Caco-2 (cell line): ENCODE measurements at regions of chrX and their contacts with region 1.

Region 1: DNA sequence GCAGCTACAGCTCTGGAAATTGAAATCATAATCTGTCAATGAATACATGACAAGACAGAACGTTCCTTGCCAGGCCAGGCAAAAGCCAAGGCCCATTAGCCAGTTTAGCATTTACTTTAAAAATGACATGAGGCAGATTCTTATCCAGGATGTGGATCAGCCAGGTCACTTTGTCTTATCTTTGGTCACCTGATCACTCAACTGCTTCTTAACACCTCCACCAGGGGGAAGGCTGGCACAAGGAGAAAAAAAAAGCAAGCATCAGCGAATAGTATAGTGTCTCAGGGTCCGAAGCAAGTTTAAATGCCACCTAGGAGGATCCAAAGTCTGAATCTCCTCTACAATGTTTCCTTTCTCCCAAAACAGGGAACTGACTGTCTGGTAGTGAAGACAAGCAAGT is 18.8 kb downstream of the ATP1B4 start:
- DNase-seq: peak in 1 of 2 experiments; percentile 24
- H3K4me3 ChIP-seq: no peak overlapping the region
- H3K4me3 Mint-ChIP-seq: no peak overlapping the region
- H3K27ac Mint-ChIP-seq: no peak overlapping the region
- H3K4me1 ChIP-seq: no peaks in the 10 kb centered on the region
- H3K4me1 Mint-ChIP-seq: no peaks in the 10 kb centered on the region
- H3K27me3 ChIP-seq: no peaks in the 10 kb centered on the region
- H3K27me3 Mint-ChIP-seq: peaks cover 4% of the 10 kb centered on the region
- CTCF ChIP-seq: peak in 1 of 2 experiments; percentile 39

Region 2: DNA sequence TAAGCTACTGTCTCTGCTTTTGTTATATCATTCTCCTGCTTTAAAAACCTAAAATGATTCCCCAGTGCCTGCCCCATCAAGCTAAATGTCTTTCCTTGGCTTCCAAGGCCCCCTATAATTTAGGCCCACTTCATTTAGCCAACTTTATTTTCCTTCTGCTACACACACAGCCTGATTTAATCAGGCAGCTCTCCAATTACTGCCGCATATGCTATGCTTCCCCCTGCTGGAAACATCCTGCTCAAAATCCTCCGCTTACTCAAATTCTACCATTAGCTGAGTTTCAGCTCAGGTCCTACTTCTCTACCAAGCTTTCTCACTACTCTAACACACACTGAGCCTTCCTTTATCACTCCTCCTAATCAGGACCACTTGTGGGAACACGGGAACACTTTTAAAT is 71.4 kb after region 1 on chrX:
- CTCF ChIA-PET with region 1: no interaction called
- POLR2A ChIA-PET with region 1: no interaction called
- intact Hi-C with region 1: loop called (anchors 2 kb)
- DNase-seq: peak in 1 of 2 experiments; percentile 6
- H3K4me3 ChIP-seq: no peak overlapping the region
- H3K4me3 Mint-ChIP-seq: no peak overlapping the region
- H3K27ac Mint-ChIP-seq: no peak overlapping the region
- H3K4me1 ChIP-seq: no peaks in the 10 kb centered on the region
- H3K4me1 Mint-ChIP-seq: no peaks in the 10 kb centered on the region
- H3K27me3 ChIP-seq: no peaks in the 10 kb centered on the region
- H3K27me3 Mint-ChIP-seq: no peaks in the 10 kb centered on the region
- CTCF ChIP-seq: peak in 1 of 2 experiments; percentile 37

Region 3: DNA sequence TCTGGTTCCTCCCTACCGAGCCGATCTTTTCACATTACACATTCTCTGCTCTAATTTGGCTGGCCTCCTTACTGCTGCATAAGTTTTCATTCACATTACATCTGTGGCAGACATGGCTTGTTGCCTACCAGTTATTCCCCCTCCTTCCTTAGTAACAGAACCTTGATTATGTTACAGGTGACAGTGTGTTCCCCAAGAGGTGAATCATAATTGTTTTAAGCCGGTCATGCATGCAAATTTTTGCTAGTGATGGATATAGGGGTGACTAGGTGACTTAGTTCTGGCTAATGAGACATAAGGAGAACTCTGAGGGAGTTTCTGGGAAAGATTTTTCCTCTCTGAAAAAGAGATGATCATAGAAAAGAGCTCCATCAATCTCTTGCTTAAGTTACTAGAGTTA is 96.8 kb after region 1 on chrX:
- CTCF ChIA-PET with region 1: no interaction called
- POLR2A ChIA-PET with region 1: no interaction called
- intact Hi-C with region 1: loop called (anchors 1 kb)
- DNase-seq: no peak
- H3K4me3 ChIP-seq: no peak overlapping the region
- H3K4me3 Mint-ChIP-seq: no peak overlapping the region
- H3K27ac Mint-ChIP-seq: no peak overlapping the region
- H3K4me1 ChIP-seq: no peaks in the 10 kb centered on the region
- H3K4me1 Mint-ChIP-seq: no peaks in the 10 kb centered on the region
- H3K27me3 ChIP-seq: no peaks in the 10 kb centered on the region
- H3K27me3 Mint-ChIP-seq: peaks cover 4% of the 10 kb centered on the region
- CTCF ChIP-seq: no peak